ENCODE measurements at regions of chr5 and their contacts with region 1.

Region 1: DNA sequence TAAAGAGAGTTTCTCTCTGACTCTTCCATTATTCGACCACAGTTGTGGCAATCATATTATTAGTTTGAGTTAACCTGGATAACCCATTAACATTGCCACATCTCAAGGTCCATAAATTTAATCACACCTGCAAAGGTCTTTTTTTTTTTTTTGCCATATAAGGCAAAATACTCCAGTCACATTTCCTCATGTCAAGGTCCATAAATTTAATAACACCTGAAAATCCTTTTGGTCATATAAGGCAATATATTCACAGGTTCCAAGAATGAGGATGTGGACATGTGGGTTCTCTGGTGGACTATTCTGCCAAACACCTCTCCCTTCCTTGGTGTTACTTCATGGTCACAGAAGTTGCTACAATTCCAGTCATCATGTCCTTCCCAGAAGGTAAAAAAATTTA is 213.5 kb upstream of the COX7C start:
- DNase-seq: no peak
- ATAC-seq: no peak
- H3K4me3 ChIP-seq: no peak overlapping the region
- H3K27ac ChIP-seq: no peak overlapping the region
- H3K4me1 ChIP-seq: no peaks in the 10 kb centered on the region
- H3K27me3 ChIP-seq: no peaks in the 10 kb centered on the region
- CTCF ChIP-seq: no peak

Region 2: GRCh38 chr5:87327998-87328397 is 923.7 kb after region 1 on chr5:
- intact Hi-C with region 1: no loop called
- DNase-seq: no peak
- ATAC-seq: no peak
- H3K4me3 ChIP-seq: no peak overlapping the region
- H3K27ac ChIP-seq: no peak overlapping the region
- H3K4me1 ChIP-seq: peaks cover 0 to 26% (median 12%) of the 10 kb centered on the region in 9 donors
- H3K27me3 ChIP-seq: no peaks in the 10 kb centered on the region
- CTCF ChIP-seq: no peak

Region 3: GRCh38 chr5:88398316-88398715 is 1994.1 kb after region 1 on chr5:
- intact Hi-C with region 1: loop called in 1 of 10 experiments (anchors 5 kb)
- DNase-seq: no peak
- ATAC-seq: no peak
- H3K4me3 ChIP-seq: peak overlapping the region in 3 of 10 donors; percentile 32 to 36 (median 36)
- H3K27ac ChIP-seq: no peak overlapping the region
- H3K4me1 ChIP-seq: peaks cover 0 to 9% (median 0%) of the 10 kb centered on the region in 9 donors
- H3K27me3 ChIP-seq: no peaks in the 10 kb centered on the region
- CTCF ChIP-seq: no peak